Gastrocnemius medialis (tissue), 4 donors: ENCODE measurements at regions of chr3 and their contacts with region 1.

Region 1: DNA sequence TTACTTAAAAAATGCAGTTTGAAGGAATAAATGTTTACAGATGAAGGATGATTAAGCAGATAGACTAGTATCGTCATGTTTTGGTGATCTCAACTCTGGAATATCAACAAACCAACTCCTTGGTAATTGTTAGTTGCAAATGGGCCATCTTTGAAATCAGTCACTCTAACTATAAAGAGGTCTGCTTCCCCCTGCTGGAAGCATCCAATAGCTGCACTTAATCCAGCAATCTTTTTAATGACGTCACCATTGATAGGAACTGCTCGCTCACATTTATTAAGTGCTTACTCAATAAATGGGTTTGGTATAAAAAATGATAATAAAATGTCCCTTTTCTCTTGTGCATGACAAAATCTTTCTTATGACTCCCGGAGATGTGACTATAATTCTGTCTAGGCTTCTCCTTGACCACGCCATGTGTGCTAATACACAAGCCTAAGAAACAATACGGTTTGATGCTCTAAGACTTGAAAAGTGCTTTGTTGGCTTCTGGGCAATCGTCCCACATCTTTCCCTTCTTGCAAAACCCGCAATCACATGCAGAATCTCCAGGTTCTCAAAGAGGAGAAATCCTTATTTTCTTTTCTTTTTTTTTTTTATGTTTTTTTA is 227.6 kb upstream of the POU1F1 start:
- DNase-seq: no peak
- ATAC-seq: no peak
- H3K4me3 ChIP-seq: no peak overlapping the region
- H3K27ac ChIP-seq: no peak overlapping the region
- H3K4me1 ChIP-seq: no peaks in the 10 kb centered on the region
- H3K27me3 ChIP-seq: no peaks in the 10 kb centered on the region
- CTCF ChIP-seq: no peak
- POLR2A ChIP-seq: no peak

Region 2: GRCh38 chr3:87390821-87391220 is 113.2 kb before region 1 on chr3:
- in situ Hi-C with region 1: no loop called
- intact Hi-C with region 1: no loop called
- DNase-seq: no peak
- ATAC-seq: no peak
- H3K4me3 ChIP-seq: no peak overlapping the region
- H3K27ac ChIP-seq: no peak overlapping the region
- H3K4me1 ChIP-seq: no peaks in the 10 kb centered on the region
- H3K27me3 ChIP-seq: no peaks in the 10 kb centered on the region
- CTCF ChIP-seq: no peak
- POLR2A ChIP-seq: no peak

Region 3: GRCh38 chr3:87410110-87410509 is 93.9 kb before region 1 on chr3:
- in situ Hi-C with region 1: loop called in 1 of 4 experiments (anchors 25 kb)
- intact Hi-C with region 1: no loop called
- DNase-seq: no peak
- ATAC-seq: no peak
- H3K4me3 ChIP-seq: no peak overlapping the region
- H3K27ac ChIP-seq: no peak overlapping the region
- H3K4me1 ChIP-seq: no peaks in the 10 kb centered on the region
- H3K27me3 ChIP-seq: no peaks in the 10 kb centered on the region
- CTCF ChIP-seq: no peak
- POLR2A ChIP-seq: no peak

Region 4: GRCh38 chr3:87575553-87575952 is 71.5 kb after region 1 on chr3:
- in situ Hi-C with region 1: no loop called
- intact Hi-C with region 1: no loop called
- DNase-seq: no peak
- ATAC-seq: no peak
- H3K4me3 ChIP-seq: no peak overlapping the region
- H3K27ac ChIP-seq: no peak overlapping the region
- H3K4me1 ChIP-seq: no peaks in the 10 kb centered on the region
- H3K27me3 ChIP-seq: no peaks in the 10 kb centered on the region
- CTCF ChIP-seq: no peak
- POLR2A ChIP-seq: no peak

Region 5: DNA sequence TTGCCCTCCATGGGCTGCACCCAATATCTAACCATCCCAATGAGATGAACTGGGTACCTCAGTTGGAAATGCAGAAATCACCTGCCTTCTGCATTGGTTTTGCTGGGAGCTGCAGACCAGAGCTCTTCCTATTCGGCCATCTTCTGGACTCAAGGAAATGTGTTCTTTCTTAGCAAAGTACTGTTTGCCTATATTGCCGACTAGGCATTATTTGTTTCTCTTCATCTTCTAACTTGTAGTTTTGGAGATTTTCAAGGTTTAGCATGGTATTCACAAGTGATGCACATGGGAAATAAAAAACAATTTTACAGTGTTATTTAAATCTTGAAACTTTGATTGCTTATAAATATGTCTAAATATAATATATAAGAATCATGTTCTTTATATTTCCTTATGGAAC is 150.2 kb after region 1 on chr3:
- in situ Hi-C with region 1: no loop called
- intact Hi-C with region 1: no loop called
- DNase-seq: no peak
- ATAC-seq: no peak
- H3K4me3 ChIP-seq: no peak overlapping the region
- H3K27ac ChIP-seq: no peak overlapping the region
- H3K4me1 ChIP-seq: no peaks in the 10 kb centered on the region
- H3K27me3 ChIP-seq: no peaks in the 10 kb centered on the region
- CTCF ChIP-seq: no peak
- POLR2A ChIP-seq: no peak